Mucosa of descending colon (tissue), 3 donors: ENCODE measurements at regions of chr5 and their contacts with region 1.

Region 1: GRCh38 chr5:155268770-155269425 is 255.3 kb downstream of the KIF4B start:
- DNase-seq: no peak
- ATAC-seq: no peak
- H3K4me3 ChIP-seq: no peak overlapping the region
- H3K4me1 ChIP-seq: no peaks in the 10 kb centered on the region
- CTCF ChIP-seq: no peak

Region 2: GRCh38 chr5:155239803-155240202 is 29.1 kb before region 1 on chr5:
- intact Hi-C with region 1: loop called in 1 of 2 experiments (anchors 1 kb)
- DNase-seq: no peak
- ATAC-seq: no peak
- H3K4me3 ChIP-seq: no peak overlapping the region
- H3K4me1 ChIP-seq: no peaks in the 10 kb centered on the region
- CTCF ChIP-seq: no peak